ENCODE measurements at regions of chr13 and their contacts with region 1.

Region 1: DNA sequence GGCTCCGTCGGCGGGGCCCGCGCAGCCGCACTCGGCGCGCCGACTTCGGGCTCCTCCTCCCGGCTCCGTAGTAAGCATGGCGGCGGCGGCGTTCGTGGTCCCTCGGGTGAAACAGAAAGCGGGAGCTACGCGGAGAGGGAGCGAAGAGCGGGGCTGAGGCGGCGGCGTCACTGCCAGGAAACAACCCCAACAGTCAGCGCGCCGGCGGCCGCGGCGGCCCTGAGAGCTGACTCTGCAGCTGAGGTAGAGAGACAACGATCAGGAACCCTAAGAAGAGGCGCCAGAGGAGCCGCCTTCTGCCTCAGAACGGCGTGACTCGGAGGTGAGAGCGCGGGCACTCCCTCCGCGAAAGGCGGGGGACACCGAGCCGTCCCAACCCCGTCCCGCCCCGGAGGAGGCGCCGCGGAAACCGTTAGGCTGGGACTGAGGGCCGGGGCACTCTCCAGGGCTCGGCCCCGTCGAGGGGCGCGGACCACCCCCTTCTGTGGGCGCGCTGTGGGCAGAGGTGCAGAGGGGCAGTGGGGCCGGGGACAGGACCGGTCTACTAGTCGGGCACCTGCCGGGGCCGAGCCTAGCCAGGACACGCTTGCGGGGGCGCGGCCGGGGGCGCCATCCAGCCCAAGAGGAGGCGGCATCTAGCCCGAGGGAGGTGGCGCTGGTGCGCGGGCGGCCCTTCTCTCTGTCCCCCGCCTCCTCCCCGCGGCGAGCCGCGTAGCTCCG is at the start of gene FNDC3A:
- DNase-seq: peak; percentile 93
- ATAC-seq: peak; percentile 78
- H3K4me3 ChIP-seq: peak within 1 kb of the TSS; percentile 85 to 95 (median 88)
- H3K4me3 Mint-ChIP-seq: peak within 1 kb of the TSS; percentile 98
- H3K27ac ChIP-seq: peak within 1 kb of the TSS; percentile 95 to 96
- H3K27ac Mint-ChIP-seq: peak within 1 kb of the TSS; percentile 100
- H3K4me1 ChIP-seq: peaks cover 40 to 46% of the 10 kb centered on the region in 2 donors
- H3K4me1 Mint-ChIP-seq: peaks cover 45% of the 10 kb centered on the region
- H3K27me3 ChIP-seq: no peaks in the 10 kb centered on the region
- H3K27me3 Mint-ChIP-seq: no peaks in the 10 kb centered on the region
- CTCF ChIP-seq: no peak
- total RNA-seq, gene FNDC3A: 37.1 and 38.6 TPM in 2 replicates

Region 2: DNA sequence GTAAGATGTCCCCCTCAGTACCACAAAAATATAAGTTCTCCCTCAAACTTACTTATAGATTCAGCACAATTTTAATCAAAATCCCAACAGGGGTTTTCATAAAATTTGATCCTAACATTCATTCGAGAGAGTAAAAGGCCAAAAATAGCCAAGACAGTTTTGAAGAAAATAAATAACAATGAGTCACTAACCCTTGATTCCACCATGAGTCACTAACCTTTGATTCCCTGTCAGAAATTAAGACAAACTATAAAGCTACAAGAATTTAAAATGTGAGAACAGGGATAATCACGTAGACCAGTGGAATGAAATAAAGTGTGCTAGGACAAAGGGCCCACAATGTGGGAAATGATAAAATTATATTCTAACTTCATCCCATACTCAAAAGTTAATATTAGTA is 1295.3 kb before region 1 on chr13:
- CTCF ChIA-PET with region 1: no interaction called
- POLR2A ChIA-PET with region 1: no interaction called
- intact Hi-C with region 1: no loop called
- DNase-seq: no peak
- ATAC-seq: no peak
- H3K4me3 ChIP-seq: no peak overlapping the region
- H3K4me3 Mint-ChIP-seq: no peak overlapping the region
- H3K27ac ChIP-seq: no peak overlapping the region
- H3K27ac Mint-ChIP-seq: no peak overlapping the region
- H3K4me1 ChIP-seq: no peaks in the 10 kb centered on the region
- H3K4me1 Mint-ChIP-seq: no peaks in the 10 kb centered on the region
- H3K27me3 ChIP-seq: no peaks in the 10 kb centered on the region
- H3K27me3 Mint-ChIP-seq: peaks cover 9% of the 10 kb centered on the region
- CTCF ChIP-seq: no peak

Region 3: GRCh38 chr13:48094781-48095502 is 881.1 kb before region 1 on chr13 and contains the start of gene MED4:
- CTCF ChIA-PET with region 1: no interaction called
- POLR2A ChIA-PET with region 1: no interaction called
- intact Hi-C with region 1: loop called (anchors 5 kb)
- DNase-seq: peak; percentile 97
- ATAC-seq: peak; percentile 99
- H3K4me3 ChIP-seq: peak within 1 kb of the TSS; percentile 86 to 99 (median 92)
- H3K4me3 Mint-ChIP-seq: peak within 1 kb of the TSS; percentile 94
- H3K27ac ChIP-seq: peak within 1 kb of the TSS; percentile 83 to 89
- H3K27ac Mint-ChIP-seq: peak within 1 kb of the TSS; percentile 95
- H3K4me1 ChIP-seq: peaks cover 16 to 17% of the 10 kb centered on the region in 2 donors
- H3K4me1 Mint-ChIP-seq: peaks cover 35% of the 10 kb centered on the region
- H3K27me3 ChIP-seq: no peaks in the 10 kb centered on the region
- H3K27me3 Mint-ChIP-seq: peaks cover 10% of the 10 kb centered on the region
- CTCF ChIP-seq: peak; percentile 99
- total RNA-seq, gene MED4: 49.7 and 50.1 TPM in 2 replicates

Region 4: DNA sequence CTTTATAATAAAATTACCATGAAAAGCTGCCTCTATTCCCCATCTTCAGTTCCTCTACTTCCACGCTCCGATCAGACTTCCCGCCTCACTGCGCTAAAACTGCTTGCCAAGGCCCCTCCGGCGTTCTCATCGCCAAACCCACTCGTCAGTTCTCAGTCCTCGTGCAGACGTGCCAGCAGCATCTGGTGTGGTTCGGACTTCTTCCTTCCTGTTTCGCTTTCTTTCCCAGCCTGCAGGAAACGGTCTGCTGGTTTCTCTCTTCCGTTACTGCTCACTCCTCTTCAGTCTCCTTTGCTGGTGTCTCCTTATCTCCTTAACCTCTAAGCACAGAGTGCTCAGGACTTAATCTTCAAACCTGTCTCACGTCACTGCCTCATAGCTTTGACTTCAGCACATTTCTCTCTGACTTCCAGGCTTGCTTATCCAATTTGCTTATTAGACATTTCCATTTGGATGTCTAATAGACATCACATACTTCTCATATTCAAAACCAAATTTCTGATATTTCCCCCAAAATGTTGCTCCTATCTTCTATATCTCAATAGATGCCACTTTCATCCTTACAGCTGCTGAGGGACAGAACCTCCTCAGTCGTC is 483.4 kb before region 1 on chr13:
- CTCF ChIA-PET with region 1: no interaction called
- POLR2A ChIA-PET with region 1: no interaction called
- intact Hi-C with region 1: loop called (anchors 5 kb)
- DNase-seq: peak; percentile 91
- ATAC-seq: peak; percentile 86
- H3K4me3 ChIP-seq: peak overlapping the region; percentile 10 to 65 (median 32)
- H3K4me3 Mint-ChIP-seq: no peak overlapping the region
- H3K27ac ChIP-seq: peak overlapping the region; percentile 63 to 66
- H3K27ac Mint-ChIP-seq: no peak overlapping the region
- H3K4me1 ChIP-seq: peaks cover 57% of the 10 kb centered on the region in 2 donors
- H3K4me1 Mint-ChIP-seq: peaks cover 38% of the 10 kb centered on the region
- H3K27me3 ChIP-seq: no peaks in the 10 kb centered on the region
- H3K27me3 Mint-ChIP-seq: no peaks in the 10 kb centered on the region
- CTCF ChIP-seq: no peak

Region 5: DNA sequence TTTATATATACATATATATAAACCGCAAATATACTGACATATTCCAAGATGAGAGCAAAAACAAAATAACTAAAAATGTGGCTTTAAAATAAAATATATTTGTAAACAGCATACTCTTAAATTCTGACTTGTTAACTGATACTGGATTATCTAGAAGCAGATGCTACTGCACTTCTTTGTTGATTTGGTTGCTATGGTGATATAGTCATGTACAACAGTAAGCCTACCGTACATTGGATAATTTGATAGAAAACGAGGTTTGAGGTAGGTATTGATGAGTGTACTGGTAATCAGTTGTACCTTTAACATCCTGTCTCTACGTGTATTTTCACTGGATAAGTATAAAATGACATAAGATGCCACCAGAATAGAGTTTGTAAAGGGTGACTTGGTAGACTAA is 57.1 kb after region 1 on chr13:
- CTCF ChIA-PET with region 1: no interaction called
- POLR2A ChIA-PET with region 1: no interaction called
- intact Hi-C with region 1: loop called (anchors 5 kb)
- DNase-seq: no peak
- ATAC-seq: no peak
- H3K4me3 ChIP-seq: no peak overlapping the region
- H3K4me3 Mint-ChIP-seq: no peak overlapping the region
- H3K27ac ChIP-seq: no peak overlapping the region
- H3K27ac Mint-ChIP-seq: no peak overlapping the region
- H3K4me1 ChIP-seq: no peaks in the 10 kb centered on the region
- H3K4me1 Mint-ChIP-seq: peaks cover 4% of the 10 kb centered on the region
- H3K27me3 ChIP-seq: no peaks in the 10 kb centered on the region
- H3K27me3 Mint-ChIP-seq: no peaks in the 10 kb centered on the region
- CTCF ChIP-seq: no peak

Region 6: GRCh38 chr13:49247643-49248621 is 271.9 kb after region 1 on chr13 and contains the start of gene CDADC1:
- CTCF ChIA-PET with region 1: no interaction called
- POLR2A ChIA-PET with region 1: interaction called, 3 read pairs
- intact Hi-C with region 1: loop called (anchors 5 kb)
- DNase-seq: peak; percentile 92
- ATAC-seq: peak; percentile 95
- H3K4me3 ChIP-seq: peak within 1 kb of the TSS; percentile 86 to 92 (median 89)
- H3K4me3 Mint-ChIP-seq: peak within 1 kb of the TSS; percentile 100
- H3K27ac ChIP-seq: peak within 1 kb of the TSS; percentile 76 to 86
- H3K27ac Mint-ChIP-seq: peak within 1 kb of the TSS; percentile 97
- H3K4me1 ChIP-seq: peaks cover 10 to 11% of the 10 kb centered on the region in 2 donors
- H3K4me1 Mint-ChIP-seq: peaks cover 26% of the 10 kb centered on the region
- H3K27me3 ChIP-seq: no peaks in the 10 kb centered on the region
- H3K27me3 Mint-ChIP-seq: no peaks in the 10 kb centered on the region
- CTCF ChIP-seq: no peak
- total RNA-seq, gene CDADC1: 14.5 and 15.1 TPM in 2 replicates

Region 7: DNA sequence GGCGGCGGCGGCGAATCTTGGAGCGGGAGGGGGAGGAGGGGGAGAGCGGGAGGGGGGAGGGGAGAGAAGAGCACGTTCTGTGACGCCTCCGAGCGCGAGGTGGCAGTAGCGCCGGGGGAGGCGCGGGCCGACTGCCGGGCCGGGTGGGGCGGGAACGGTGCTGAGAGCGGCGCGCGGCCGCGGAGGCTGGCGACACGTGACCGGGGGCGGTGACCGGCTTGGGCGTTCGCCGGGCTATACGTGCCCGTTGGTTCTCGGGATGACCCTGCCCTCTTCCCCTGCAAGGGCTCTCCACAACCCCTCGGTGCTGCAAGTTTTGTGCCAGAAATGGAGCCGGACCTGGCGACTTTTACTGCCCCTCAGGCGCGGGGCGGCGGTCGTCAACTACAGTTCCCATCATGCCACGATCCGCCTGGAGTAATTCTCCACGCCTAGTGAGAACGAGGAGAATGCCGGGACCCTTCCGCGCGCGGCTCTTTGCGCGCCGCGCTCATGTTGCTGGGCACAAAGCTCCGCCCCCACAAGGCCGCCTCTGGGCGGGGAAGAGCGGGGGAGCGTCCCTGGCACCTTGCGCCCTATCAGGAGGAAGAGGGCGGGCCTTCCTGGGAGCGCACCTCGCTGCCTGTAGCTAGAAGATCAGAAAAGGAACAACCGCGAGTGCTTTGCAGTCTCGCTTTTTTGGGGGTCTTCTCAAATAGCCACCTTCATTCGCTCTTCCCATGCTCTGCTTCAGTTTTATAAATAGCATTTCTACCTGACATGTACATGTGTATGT is 816.7 kb after region 1 on chr13 and contains the start of gene KPNA3:
- CTCF ChIA-PET with region 1: no interaction called
- POLR2A ChIA-PET with region 1: no interaction called
- intact Hi-C with region 1: loop called (anchors 2 kb)
- DNase-seq: peak; percentile 97
- ATAC-seq: peak; percentile 87
- H3K4me3 ChIP-seq: peak within 1 kb of the TSS; percentile 79 to 88 (median 80)
- H3K4me3 Mint-ChIP-seq: peak within 1 kb of the TSS; percentile 97
- H3K27ac ChIP-seq: peak within 1 kb of the TSS; percentile 85 to 91
- H3K27ac Mint-ChIP-seq: peak within 1 kb of the TSS; percentile 99
- H3K4me1 ChIP-seq: peaks cover 20 to 21% of the 10 kb centered on the region in 2 donors
- H3K4me1 Mint-ChIP-seq: peaks cover 34% of the 10 kb centered on the region
- H3K27me3 ChIP-seq: no peaks in the 10 kb centered on the region
- H3K27me3 Mint-ChIP-seq: peaks cover 4% of the 10 kb centered on the region
- CTCF ChIP-seq: no peak
- total RNA-seq, gene KPNA3: 19.0 and 19.7 TPM in 2 replicates

Region 8: DNA sequence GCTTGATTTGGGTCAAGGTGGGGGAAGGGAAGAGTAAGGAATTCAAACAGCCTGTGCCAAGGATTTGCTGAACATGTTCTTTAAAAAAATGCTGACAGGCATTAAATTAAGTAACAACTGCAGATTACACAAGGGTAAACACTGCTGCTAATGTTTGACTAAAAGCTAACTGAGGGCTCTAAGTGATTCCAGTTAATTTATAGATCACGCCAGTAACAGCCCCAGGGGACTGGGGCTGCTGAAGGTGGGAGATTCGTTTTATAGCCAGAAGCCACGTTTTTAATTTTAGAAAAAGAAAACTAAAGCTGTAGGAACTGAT is 1545.8 kb after region 1 on chr13:
- CTCF ChIA-PET with region 1: no interaction called
- POLR2A ChIA-PET with region 1: no interaction called
- intact Hi-C with region 1: no loop called
- DNase-seq: no peak
- ATAC-seq: no peak
- H3K4me3 ChIP-seq: no peak overlapping the region
- H3K4me3 Mint-ChIP-seq: no peak overlapping the region
- H3K27ac ChIP-seq: no peak overlapping the region
- H3K27ac Mint-ChIP-seq: no peak overlapping the region
- H3K4me1 ChIP-seq: peaks cover 9 to 11% of the 10 kb centered on the region in 2 donors
- H3K4me1 Mint-ChIP-seq: peaks cover 15% of the 10 kb centered on the region
- H3K27me3 ChIP-seq: no peaks in the 10 kb centered on the region
- H3K27me3 Mint-ChIP-seq: no peaks in the 10 kb centered on the region
- CTCF ChIP-seq: no peak